Activated CD8-positive, alpha-beta T cell treated with anti-CD3 and anti-CD28 coated beads, Interleukin-2, amount 10 ng/mL, durations not matched to agents 7 days and 5 days (primary cell): ENCODE measurements at regions of chr6 and their contacts with region 1.

Region 1: DNA sequence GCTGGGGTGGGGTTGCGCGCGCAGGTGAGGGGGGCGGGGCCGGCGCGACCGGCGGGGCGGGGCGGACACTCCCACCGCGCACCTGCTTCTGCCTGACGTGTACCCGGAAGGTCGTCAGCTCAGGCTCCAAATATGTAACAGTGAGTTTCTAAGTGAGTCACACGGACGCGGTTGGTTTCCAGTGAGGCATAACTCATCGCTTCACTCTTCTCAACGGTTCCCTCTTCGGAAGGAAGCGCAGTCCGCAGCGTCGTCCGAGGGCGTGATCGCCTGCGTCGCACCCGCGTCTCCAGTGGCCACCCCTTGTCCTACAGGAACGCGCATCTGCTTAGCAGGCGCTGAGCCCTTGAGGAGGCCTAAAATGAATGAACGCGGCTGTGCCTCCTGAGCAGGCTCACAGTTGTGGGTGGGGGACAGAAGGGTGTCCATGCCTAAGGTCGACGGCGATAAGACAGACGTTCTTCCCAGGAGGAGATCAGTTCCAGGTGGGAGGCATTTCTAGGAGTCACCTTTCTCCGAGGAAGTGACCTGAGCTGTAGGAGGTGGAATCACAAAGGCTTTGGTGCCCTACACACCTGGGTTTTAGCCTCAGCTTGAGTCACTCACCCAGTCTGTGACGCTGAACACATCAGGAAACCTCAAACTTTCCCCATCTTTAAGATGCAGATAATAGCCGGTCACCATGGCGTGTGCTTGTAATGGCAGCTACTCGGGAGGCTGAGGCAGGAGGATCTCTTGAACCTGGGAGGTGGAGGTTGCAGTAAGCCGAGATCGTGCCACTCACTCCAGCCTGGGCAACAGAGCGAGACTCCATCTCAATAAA is 50.9 kb upstream of the EZR start:
- DNase-seq: peak; percentile 96
- ATAC-seq: peak; percentile 94
- H3K4me3 Mint-ChIP-seq: peak overlapping the region; percentile 74
- H3K27ac Mint-ChIP-seq: peak overlapping the region; percentile 99
- H3K4me1 Mint-ChIP-seq: peaks cover 37% of the 10 kb centered on the region
- H3K27me3 Mint-ChIP-seq: peaks cover 8% of the 10 kb centered on the region

Region 2: GRCh38 chr6:158780988-158781708 is 88.9 kb before region 1 on chr6:
- CTCF ChIA-PET with region 1: no interaction called
- POLR2A ChIA-PET with region 1: no interaction called
- DNase-seq: no peak
- ATAC-seq: no peak
- H3K4me3 Mint-ChIP-seq: no peak overlapping the region
- H3K27ac Mint-ChIP-seq: no peak overlapping the region
- H3K4me1 Mint-ChIP-seq: peaks cover 32% of the 10 kb centered on the region
- H3K27me3 Mint-ChIP-seq: no peaks in the 10 kb centered on the region

Region 3: DNA sequence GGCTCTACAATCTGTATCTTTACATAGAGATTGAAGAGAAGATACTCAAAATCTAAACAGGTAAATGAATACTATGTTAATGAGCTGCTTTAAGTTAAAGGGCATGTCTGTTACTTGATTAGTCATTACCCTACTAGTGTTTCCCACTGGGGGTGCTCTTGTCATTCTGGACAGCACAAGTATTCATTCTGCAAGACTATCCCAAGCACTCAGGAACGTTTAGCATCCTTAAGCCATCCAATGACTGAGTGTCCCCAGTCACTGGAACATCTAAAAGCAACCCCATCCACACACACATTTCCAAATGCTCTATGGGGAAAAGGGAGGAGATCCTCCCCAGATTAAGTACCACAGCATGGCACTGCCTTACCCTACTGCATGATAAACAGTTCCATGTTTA is 76.6 kb before region 1 on chr6:
- CTCF ChIA-PET with region 1: interaction called, 12 read pairs
- POLR2A ChIA-PET with region 1: interaction called, 18 read pairs
- DNase-seq: no peak
- ATAC-seq: no peak
- H3K4me3 Mint-ChIP-seq: no peak overlapping the region
- H3K27ac Mint-ChIP-seq: no peak overlapping the region
- H3K4me1 Mint-ChIP-seq: peaks cover 82% of the 10 kb centered on the region
- H3K27me3 Mint-ChIP-seq: no peaks in the 10 kb centered on the region

Region 4: DNA sequence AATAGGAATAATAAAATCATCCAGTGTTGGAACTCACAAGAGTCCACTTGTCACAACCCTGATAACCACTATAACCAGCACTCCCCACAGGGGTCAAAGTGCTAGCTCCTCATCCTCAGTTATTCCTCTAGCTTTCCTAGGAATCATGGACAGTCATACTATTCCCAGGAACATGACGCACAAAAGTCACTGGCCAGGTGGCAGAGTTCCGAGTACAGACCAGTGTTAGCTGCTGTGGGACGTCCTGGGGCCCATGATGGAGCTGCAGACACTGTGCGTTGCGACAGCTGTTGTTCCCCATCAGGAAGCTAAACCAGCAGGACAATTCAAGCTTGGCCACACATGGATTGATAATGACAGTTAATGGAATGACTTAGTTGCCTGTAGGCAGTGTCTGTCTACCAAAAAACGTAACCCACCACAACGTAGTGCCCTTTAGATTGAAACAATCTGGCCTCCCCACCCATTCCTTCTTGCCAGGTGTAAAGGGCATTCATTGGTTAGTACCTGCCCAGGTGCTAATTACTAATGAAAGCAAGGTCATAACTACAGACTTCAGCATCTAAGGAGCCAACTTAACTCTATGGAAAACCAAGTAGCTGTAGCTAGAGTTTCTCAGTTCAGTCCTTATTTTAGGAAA is 68.3 kb before region 1 on chr6:
- CTCF ChIA-PET with region 1: interaction called, 4 read pairs
- POLR2A ChIA-PET with region 1: interaction called, 14 read pairs
- DNase-seq: no peak
- ATAC-seq: no peak
- H3K4me3 Mint-ChIP-seq: no peak overlapping the region
- H3K27ac Mint-ChIP-seq: peak overlapping the region; percentile 35
- H3K4me1 Mint-ChIP-seq: peaks cover 86% of the 10 kb centered on the region
- H3K27me3 Mint-ChIP-seq: no peaks in the 10 kb centered on the region

Region 5: DNA sequence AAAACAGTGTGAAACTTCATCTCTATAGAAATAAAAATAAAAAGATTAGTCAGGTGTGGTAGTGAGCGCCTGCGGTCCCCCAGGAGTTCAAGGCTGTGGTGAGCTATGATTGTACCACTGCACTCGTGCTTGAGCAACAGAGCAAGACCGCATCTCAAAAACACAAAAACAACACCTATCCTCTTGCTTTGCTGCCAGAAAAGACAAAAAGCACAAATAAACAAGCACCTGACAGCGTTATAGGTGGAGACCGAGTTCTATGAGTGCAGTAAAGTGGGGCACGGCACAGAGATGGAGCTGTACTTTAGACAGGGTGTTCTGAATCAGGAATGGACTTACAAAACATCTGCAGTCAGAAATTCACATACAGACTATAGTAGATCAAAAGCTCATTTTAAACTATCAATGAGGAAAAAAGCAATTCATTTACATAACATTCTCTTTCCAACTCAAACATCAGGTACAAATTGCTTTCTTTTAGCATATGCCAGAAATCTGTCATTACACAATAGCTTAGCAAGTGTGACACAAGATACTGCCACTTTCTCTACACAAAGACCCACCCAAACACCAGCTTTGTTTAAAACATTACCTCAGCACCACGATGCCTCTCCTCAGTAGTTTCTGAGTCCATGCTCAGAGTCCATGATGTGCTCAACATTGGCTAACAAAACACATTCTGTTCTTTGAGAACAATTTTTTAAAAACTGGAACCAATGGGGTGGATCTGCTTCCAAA is 60.9 kb before region 1 on chr6:
- CTCF ChIA-PET with region 1: interaction called, 5 read pairs
- POLR2A ChIA-PET with region 1: interaction called, 24 read pairs
- DNase-seq: no peak
- ATAC-seq: peak; percentile 26
- H3K4me3 Mint-ChIP-seq: peak overlapping the region; percentile 12
- H3K27ac Mint-ChIP-seq: peak overlapping the region; percentile 59
- H3K4me1 Mint-ChIP-seq: peaks cover 92% of the 10 kb centered on the region
- H3K27me3 Mint-ChIP-seq: no peaks in the 10 kb centered on the region

Region 6: GRCh38 chr6:158819213-158819909 is 50.7 kb before region 1 on chr6 and contains the start of gene EZR:
- CTCF ChIA-PET with region 1: interaction called, 10 read pairs
- POLR2A ChIA-PET with region 1: interaction called, 35 read pairs
- DNase-seq: peak; percentile 87
- ATAC-seq: peak; percentile 59
- H3K4me3 Mint-ChIP-seq: peak within 1 kb of the TSS; percentile 75
- H3K27ac Mint-ChIP-seq: peak within 1 kb of the TSS; percentile 91
- H3K4me1 Mint-ChIP-seq: peaks cover 40% of the 10 kb centered on the region
- H3K27me3 Mint-ChIP-seq: no peaks in the 10 kb centered on the region
- total RNA-seq, gene EZR: 177 to 180 TPM

Region 7: GRCh38 chr6:158853072-158853871 is 16.8 kb before region 1 on chr6:
- CTCF ChIA-PET with region 1: interaction called, 25 read pairs
- POLR2A ChIA-PET with region 1: interaction called, 100 read pairs
- DNase-seq: peak; percentile 90
- ATAC-seq: peak; percentile 76
- H3K4me3 Mint-ChIP-seq: no peak overlapping the region
- H3K27ac Mint-ChIP-seq: no peak overlapping the region
- H3K4me1 Mint-ChIP-seq: peaks cover 27% of the 10 kb centered on the region
- H3K27me3 Mint-ChIP-seq: no peaks in the 10 kb centered on the region

Region 8: DNA sequence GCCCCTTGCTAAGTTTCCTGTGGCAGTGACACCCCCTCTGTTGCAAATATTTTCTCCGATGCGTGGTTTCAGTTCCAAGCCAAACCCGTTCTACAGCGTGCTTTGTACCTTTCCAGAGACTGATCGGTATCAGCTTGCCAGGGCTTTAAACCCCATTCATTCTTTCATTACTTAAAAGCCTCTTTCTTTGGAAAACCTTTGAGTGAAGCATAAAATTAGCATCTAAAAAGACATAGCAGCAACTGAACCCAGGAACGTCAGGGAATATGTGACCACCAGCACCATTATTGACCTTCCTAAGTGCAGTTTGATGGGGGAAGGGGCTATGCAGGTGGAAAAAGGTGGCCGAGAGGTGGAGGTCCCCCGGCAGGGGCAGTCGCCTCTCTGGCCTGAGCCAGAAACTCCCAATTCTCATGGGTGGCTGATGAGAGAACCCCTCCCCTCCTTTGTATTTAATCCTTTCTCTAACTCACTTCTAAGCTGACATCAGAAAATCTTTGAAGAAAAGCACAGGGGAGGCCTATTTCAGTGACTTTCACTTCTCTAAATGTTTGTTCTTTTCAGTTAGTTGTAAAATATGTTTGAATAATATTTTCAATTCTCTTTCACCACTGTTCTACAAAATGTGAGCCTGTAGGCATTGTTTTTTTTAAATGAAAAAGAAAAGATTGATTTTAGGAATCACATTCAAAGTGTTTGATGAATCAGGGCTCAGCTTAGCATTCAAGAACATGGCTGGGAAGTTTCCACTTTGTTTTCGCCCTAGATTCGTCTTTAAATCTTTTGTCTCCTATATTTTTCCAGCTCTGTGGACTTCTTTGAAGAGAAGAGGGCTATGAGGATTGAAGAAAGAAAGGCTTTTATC is 40.7 kb after region 1 on chr6:
- CTCF ChIA-PET with region 1: interaction called, 3 read pairs
- POLR2A ChIA-PET with region 1: interaction called, 23 read pairs
- DNase-seq: no peak
- ATAC-seq: peak; percentile 65
- H3K4me3 Mint-ChIP-seq: peak overlapping the region; percentile 23
- H3K27ac Mint-ChIP-seq: peak overlapping the region; percentile 26
- H3K4me1 Mint-ChIP-seq: peaks cover 34% of the 10 kb centered on the region
- H3K27me3 Mint-ChIP-seq: no peaks in the 10 kb centered on the region